ENCODE measurements at regions of chr1 and their contacts with region 1.

Region 1: GRCh38 chr1:184878002-184878401 is 96.3 kb downstream of the NIBAN1 start:
- DNase-seq: no peak
- H3K4me3 ChIP-seq: no peak overlapping the region
- H3K27ac ChIP-seq: no peak overlapping the region
- H3K4me1 ChIP-seq: no peaks in the 10 kb centered on the region
- H3K27me3 ChIP-seq: no peaks in the 10 kb centered on the region
- CTCF ChIP-seq: no peak
- EP300 ChIP-seq: no peak
- POLR2A ChIP-seq: no peak

Region 2: GRCh38 chr1:185108321-185108720 is 230.3 kb after region 1 on chr1:
- intact Hi-C with region 1: loop called in 1 of 4 experiments (anchors 5 kb)
- DNase-seq: no peak
- H3K4me3 ChIP-seq: no peak overlapping the region
- H3K27ac ChIP-seq: no peak overlapping the region
- H3K4me1 ChIP-seq: no peaks in the 10 kb centered on the region
- H3K27me3 ChIP-seq: no peaks in the 10 kb centered on the region
- CTCF ChIP-seq: no peak
- EP300 ChIP-seq: no peak
- POLR2A ChIP-seq: no peak

Measured in ovary (tissue), 10 donors.